ENCODE measurements at regions of chr11 and their contacts with region 1.

Region 1: GRCh38 chr11:13343931-13344717 is 66.5 kb downstream of the BMAL1 start:
- DNase-seq: peak in 5 of 10 donors; percentile 58 to 75 (median 67)

Region 2: DNA sequence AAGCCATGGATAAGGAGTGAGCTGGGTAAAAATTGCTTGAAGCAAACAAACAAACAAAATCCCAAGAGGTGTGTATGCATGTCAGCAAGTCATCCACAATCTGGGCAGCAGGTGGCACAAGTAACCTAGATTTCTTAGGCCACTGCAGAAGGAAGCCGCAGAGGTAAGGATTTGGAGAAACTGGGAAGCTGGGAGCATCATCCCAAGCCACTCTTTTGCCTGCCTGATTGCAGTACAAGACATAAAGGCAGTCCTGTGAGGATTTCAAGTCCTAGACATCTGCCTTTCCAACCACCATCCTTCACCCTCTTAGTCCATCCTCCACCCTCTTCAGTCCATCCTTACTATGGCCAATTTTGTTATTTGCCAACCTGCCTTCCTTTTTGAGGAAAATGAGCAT is 133.7 kb before region 1 on chr11:
- intact Hi-C with region 1: loop called (anchors 5 kb)
- DNase-seq: peak in 9 of 10 donors; percentile 39 to 90 (median 71)

Region 3: GRCh38 chr11:13384908-13385640 is 41.0 kb after region 1 on chr11:
- intact Hi-C with region 1: no loop called
- DNase-seq: peak in 3 of 10 donors; percentile 26 to 79 (median 39)